Mammary epithelial cell (primary cell): ENCODE measurements at regions of chr2 and their contacts with region 1.

Region 1: GRCh38 chr2:29174937-29175336 is 59.7 kb downstream of the CLIP4 start:
- DNase-seq: no peak
- H3K4me3 ChIP-seq: no peak overlapping the region
- H3K27ac ChIP-seq: no peak overlapping the region
- H3K4me1 ChIP-seq: no peaks in the 10 kb centered on the region
- H3K27me3 ChIP-seq: no peaks in the 10 kb centered on the region
- CTCF ChIP-seq: no peak

Region 2: DNA sequence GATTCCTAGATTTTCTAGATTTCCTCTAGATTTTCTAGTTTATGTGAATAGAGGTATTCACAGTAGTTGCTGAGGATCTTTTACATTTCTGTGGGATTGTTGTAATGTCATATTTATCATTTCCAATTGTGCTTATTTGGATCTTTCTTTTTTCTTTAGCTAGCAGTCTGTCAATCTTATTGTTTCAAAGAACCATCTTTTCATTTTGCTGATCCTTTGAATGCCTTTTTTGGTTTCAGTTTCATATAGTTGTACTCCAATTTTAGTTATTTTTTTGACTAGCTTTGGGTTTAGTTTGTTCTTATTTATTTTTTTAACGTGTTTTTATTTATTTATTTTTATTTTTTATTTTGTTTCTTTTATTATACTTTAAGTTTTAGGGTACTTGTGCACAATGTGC is 35.2 kb before region 1 on chr2:
- CTCF ChIA-PET with region 1: no interaction called
- dilution Hi-C with region 1: loop called (anchors 5 kb)
- in situ Hi-C with region 1: no loop called
- intact Hi-C with region 1: no loop called
- DNase-seq: no peak
- H3K4me3 ChIP-seq: no peak overlapping the region
- H3K27ac ChIP-seq: no peak overlapping the region
- H3K4me1 ChIP-seq: no peaks in the 10 kb centered on the region
- H3K27me3 ChIP-seq: no peaks in the 10 kb centered on the region
- CTCF ChIP-seq: no peak